Tibial artery (tissue), 4 donors: ENCODE measurements at regions of chr10 and their contacts with region 1.

Region 1: GRCh38 chr10:75235375-75236177 is at the start of gene COMTD1:
- DNase-seq: peak; percentile 90 to 95
- H3K4me3 ChIP-seq: peak within 1 kb of the TSS; percentile 64 to 85
- H3K27ac ChIP-seq: peak within 1 kb of the TSS; percentile 81 to 83
- H3K4me1 ChIP-seq: peaks cover 0 to 29% (median 10%) of the 10 kb centered on the region in 4 donors
- H3K27me3 ChIP-seq: no peaks in the 10 kb centered on the region
- CTCF ChIP-seq: peak; percentile 100

Region 2: DNA sequence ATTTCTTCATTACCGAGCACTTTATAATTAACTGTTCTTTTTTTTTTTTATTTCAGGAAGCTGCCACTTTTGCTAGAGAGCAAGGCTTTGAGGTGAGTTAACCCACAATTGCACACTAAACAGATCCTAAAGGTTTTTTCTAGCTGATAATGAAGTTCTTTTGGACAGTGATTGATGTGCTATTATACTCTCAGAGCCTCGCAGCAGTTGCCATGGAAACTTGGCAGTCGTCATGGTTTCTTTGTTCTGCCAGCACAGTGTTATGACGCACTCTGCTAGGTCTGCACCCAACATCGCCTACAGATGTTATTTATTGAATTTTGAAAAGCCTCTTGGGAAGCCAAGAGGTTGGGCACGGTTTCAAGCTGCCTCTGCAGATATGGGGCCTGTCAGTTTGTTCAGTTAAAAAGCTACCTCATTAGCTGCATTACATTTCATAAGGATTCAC is 646.3 kb before region 1 on chr10:
- intact Hi-C with region 1: no loop called
- DNase-seq: peak; percentile 88 to 95
- H3K4me3 ChIP-seq: no peak overlapping the region
- H3K27ac ChIP-seq: peak overlapping the region; percentile 59 to 60
- H3K4me1 ChIP-seq: peaks cover 0 to 88% (median 36%) of the 10 kb centered on the region in 4 donors
- H3K27me3 ChIP-seq: no peaks in the 10 kb centered on the region
- CTCF ChIP-seq: no peak

Region 3: DNA sequence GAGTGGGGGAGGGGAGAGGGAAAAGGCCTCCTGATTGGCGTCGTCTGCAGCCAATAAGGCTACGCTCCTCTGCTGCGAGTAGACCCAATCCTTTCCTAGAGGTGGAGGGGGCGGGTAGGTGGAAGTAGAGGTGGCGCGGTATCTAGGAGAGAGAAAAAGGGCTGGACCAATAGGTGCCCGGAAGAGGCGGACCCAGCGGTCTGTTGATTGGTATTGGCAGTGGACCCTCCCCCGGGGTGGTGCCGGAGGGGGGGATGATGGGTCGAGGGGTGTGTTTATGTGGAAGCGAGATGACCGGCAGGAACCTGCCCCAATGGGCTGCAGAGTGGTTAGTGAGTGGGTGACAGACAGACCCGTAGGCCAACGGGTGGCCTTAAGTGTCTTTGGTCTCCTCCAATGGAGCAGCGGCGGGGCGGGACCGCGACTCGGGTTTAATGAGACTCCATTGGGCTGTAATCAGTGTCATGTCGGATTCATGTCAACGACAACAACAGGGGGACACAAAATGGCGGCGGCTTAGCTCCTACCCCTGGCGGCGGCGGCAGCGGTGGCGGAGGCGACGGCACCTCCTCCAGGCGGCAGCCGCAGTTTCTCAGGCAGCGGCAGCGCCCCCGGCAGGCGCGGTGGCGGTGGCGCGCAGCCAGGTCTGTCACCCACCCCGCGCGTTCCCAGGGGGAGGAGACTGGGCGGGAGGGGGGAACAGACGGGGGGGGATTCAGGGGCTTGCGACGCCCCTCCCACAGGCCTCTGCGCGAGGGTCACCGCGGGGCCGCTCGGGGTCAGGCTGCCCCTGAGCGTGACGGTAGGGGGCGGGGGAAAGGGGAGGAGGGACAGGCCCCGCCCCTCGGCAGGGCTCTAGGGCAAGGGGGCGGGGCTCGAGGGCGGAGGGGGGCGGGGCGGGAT is 409.2 kb before region 1 on chr10 and contains the start of gene KAT6B:
- intact Hi-C with region 1: loop called (anchors 10 kb)
- DNase-seq: peak; percentile 100
- H3K4me3 ChIP-seq: peak within 1 kb of the TSS; percentile 65 to 99
- H3K27ac ChIP-seq: peak within 1 kb of the TSS; percentile 95 to 100
- H3K4me1 ChIP-seq: peaks cover 0 to 55% (median 42%) of the 10 kb centered on the region in 4 donors
- H3K27me3 ChIP-seq: no peaks in the 10 kb centered on the region
- CTCF ChIP-seq: peak; percentile 6 to 32

Region 4: GRCh38 chr10:75111367-75111906 is 124.1 kb before region 1 on chr10 and contains the start of gene SAMD8:
- intact Hi-C with region 1: loop called (anchors 5 kb)
- DNase-seq: peak; percentile 96 to 99
- H3K4me3 ChIP-seq: peak within 1 kb of the TSS; percentile 76 to 86
- H3K27ac ChIP-seq: peak within 1 kb of the TSS; percentile 99
- H3K4me1 ChIP-seq: peaks cover 0 to 48% (median 24%) of the 10 kb centered on the region in 4 donors
- H3K27me3 ChIP-seq: no peaks in the 10 kb centered on the region
- CTCF ChIP-seq: peak; percentile 34 to 57

Region 5: GRCh38 chr10:75187961-75188426 is 47.6 kb before region 1 on chr10:
- intact Hi-C with region 1: loop called (anchors 5 kb)
- DNase-seq: peak in 1 of 2 donors; percentile 66
- H3K4me3 ChIP-seq: no peak overlapping the region
- H3K27ac ChIP-seq: no peak overlapping the region
- H3K4me1 ChIP-seq: peaks cover 0 to 15% (median 4%) of the 10 kb centered on the region in 4 donors
- H3K27me3 ChIP-seq: no peaks in the 10 kb centered on the region
- CTCF ChIP-seq: peak; percentile 51 to 59

Region 6: GRCh38 chr10:75508239-75508813 is 272.8 kb after region 1 on chr10:
- intact Hi-C with region 1: no loop called
- DNase-seq: no peak
- H3K4me3 ChIP-seq: no peak overlapping the region
- H3K27ac ChIP-seq: peak overlapping the region in 1 of 2 donors; percentile 15
- H3K4me1 ChIP-seq: peaks cover 0 to 38% (median 17%) of the 10 kb centered on the region in 4 donors
- H3K27me3 ChIP-seq: no peaks in the 10 kb centered on the region
- CTCF ChIP-seq: no peak